Left cardiac atrium (tissue), 4 donors: ENCODE measurements at regions of chr6 and their contacts with region 1.

Region 1: GRCh38 chr6:10694302-10695085 is at the starts of genes C6orf52 and PAK1IP1:
- DNase-seq: peak; percentile 95
- ATAC-seq: peak; percentile 99
- total RNA-seq, gene C6orf52: not detected
- total RNA-seq, gene PAK1IP1: 9.0 to 14.9 TPM

Region 2: GRCh38 chr6:10510592-10511367 is 183.7 kb before region 1 on chr6:
- intact Hi-C with region 1: loop called in 1 of 2 experiments (anchors 5 kb)
- DNase-seq: peak; percentile 62
- ATAC-seq: peak; percentile 95 to 96

Region 3: GRCh38 chr6:10722820-10723566 is 28.5 kb after region 1 on chr6 and contains the start of gene TMEM14C:
- intact Hi-C with region 1: loop called in 1 of 2 experiments (anchors 2 kb)
- DNase-seq: peak; percentile 100
- ATAC-seq: peak; percentile 98 to 99
- total RNA-seq, gene TMEM14C: 103 to 108 TPM

Region 4: DNA sequence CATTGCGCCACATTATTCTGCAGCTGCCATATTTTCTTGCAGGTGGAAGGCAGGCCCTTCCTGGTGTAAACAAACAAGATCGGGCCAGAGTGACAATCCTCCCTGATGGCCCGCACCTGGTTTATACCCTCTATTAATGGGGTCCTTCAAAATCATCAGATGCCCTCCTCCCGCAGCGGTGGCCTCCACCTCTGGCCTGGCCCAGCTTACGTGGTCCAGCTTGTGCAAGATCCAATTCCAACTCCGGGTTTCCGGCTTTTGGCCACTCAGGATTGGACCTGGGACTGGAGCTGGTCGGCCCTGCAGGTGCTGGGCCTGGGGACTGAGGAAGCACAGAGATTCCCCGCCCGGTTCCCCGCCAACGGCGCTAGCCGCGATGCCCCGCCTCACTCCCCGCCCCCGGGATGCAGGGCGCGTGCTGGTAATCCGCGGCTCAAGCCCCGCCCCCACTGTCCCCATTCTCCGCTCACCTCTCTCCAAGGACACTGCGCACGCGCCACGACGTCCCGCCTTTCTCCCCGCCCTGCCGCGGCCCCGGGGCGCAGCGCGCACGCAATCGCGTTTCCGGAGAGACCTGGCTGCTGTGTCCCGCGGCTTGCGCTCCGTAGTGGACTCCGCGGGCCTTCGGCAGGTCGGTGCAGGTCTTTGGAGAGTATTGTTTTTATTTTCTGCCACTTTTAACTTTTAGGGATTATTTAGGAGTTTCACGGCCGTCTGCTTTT is 52.9 kb after region 1 on chr6 and contains the start of gene TMEM14B:
- intact Hi-C with region 1: loop called in 1 of 2 experiments (anchors 2 kb)
- DNase-seq: peak; percentile 100
- ATAC-seq: peak; percentile 99
- total RNA-seq, gene TMEM14B: 91.3 to 101 TPM